ENCODE measurements at regions of chr9 and their contacts with region 1.

Region 1: GRCh38 chr9:121992571-121993212 is 100.4 kb downstream of the TTLL11 start:
- ATAC-seq: peak; percentile 83 to 95 (median 90)
- H3K4me3 ChIP-seq: no peak overlapping the region
- H3K27ac ChIP-seq: no peak overlapping the region
- H3K4me1 ChIP-seq: peaks cover 16 to 17% of the 10 kb centered on the region in 2 donors

Region 2: GRCh38 chr9:121686930-121687541 is 305.7 kb before region 1 on chr9:
- in situ Hi-C with region 1: loop called in 3 of 9 experiments (anchors 25 kb)
- ATAC-seq: peak; percentile 26 to 90 (median 44)
- H3K4me3 ChIP-seq: no peak overlapping the region
- H3K27ac ChIP-seq: no peak overlapping the region
- H3K4me1 ChIP-seq: peaks cover 30 to 35% of the 10 kb centered on the region in 2 donors

Region 3: DNA sequence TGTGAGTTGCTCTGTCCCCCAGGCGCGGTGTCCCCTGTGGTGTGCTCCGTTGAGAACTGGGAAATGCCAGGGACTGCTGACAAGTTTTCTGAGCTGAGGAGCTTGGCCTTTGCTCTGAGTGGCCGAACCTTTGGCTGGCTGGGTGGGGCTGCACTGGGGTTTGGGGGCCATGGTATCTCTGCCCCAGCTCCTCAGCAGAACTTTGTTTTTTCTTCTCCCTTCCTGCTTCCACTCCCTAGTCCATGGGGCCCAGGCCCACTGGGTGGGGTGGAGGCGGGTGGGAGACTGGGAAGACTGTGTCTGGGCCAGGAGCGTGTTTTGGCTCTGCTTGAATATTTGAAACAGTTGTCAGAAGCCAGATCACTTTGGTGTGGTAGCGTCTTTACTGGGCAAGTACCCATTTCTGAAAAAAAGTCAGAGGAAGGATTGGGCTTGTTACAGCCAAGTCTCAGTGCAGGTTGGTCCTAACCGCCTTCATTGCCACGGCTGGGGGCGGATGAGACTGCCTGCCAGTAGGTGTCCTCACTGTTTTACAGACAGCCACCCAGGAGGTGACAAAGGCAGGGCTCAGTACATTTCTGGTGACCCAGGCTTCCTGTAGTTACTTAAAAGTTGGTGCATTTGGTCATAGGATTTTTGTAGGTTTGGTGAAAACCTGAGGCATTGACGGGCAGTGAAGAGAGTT is 248.5 kb before region 1 on chr9:
- in situ Hi-C with region 1: loop called in 2 of 9 experiments (anchors 25 kb)
- ATAC-seq: peak; percentile 26 to 56 (median 50)
- H3K4me3 ChIP-seq: peak overlapping the region in 4 of 5 donors; percentile 19 to 43 (median 37)
- H3K27ac ChIP-seq: peak overlapping the region; percentile 60 to 75
- H3K4me1 ChIP-seq: peaks cover 17 to 25% of the 10 kb centered on the region in 2 donors

Measured in motor neuron (in vitro differentiated cells).